ENCODE measurements at regions of chr12 and their contacts with region 1.

Region 1: GRCh38 chr12:117236456-117237001 is 46.3 kb upstream of the FBXO21 start:
- DNase-seq: peak; percentile 93
- ATAC-seq: peak; percentile 60
- H3K4me3 Mint-ChIP-seq: no peak overlapping the region
- H3K27ac Mint-ChIP-seq: no peak overlapping the region
- H3K4me1 Mint-ChIP-seq: no peaks in the 10 kb centered on the region
- H3K27me3 Mint-ChIP-seq: peaks cover 4% of the 10 kb centered on the region
- CTCF ChIP-seq: peak; percentile 89

Region 2: DNA sequence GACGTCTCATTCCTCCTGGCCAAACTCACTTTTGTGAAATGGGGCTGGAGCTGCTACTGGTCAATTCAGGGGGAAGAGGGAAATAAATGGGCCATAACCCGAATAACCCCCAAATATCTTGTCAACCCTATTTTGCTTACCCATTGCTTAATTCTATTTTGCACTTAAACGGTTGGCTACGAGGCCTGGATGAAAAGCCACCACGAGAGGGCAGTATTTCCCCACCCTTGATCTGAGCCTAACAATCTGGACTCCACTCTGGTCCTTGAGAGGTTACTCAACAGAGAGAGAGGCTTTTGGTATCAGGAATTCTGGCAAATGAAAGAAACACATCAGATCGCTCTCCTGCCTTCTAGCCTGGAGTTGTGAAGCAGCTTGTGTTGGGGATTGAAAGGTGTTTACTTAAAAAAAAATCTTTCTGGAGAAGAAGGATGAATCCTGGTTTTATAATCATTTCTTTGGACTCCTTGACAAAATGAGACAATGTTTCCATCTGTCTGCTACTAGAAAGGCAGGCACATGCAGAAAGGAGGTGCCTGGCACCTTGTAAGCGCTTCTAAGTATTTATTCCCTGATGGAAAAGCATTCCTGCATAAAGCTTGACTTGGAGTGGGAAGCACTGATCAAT is 23.9 kb before region 1 on chr12:
- CTCF ChIA-PET with region 1: interaction called, 11 read pairs
- POLR2A ChIA-PET with region 1: no interaction called
- intact Hi-C with region 1: no loop called
- DNase-seq: peak; percentile 83
- ATAC-seq: peak; percentile 42
- H3K4me3 Mint-ChIP-seq: no peak overlapping the region
- H3K27ac Mint-ChIP-seq: no peak overlapping the region
- H3K4me1 Mint-ChIP-seq: no peaks in the 10 kb centered on the region
- H3K27me3 Mint-ChIP-seq: peaks cover 9% of the 10 kb centered on the region
- CTCF ChIP-seq: peak; percentile 79

Region 3: DNA sequence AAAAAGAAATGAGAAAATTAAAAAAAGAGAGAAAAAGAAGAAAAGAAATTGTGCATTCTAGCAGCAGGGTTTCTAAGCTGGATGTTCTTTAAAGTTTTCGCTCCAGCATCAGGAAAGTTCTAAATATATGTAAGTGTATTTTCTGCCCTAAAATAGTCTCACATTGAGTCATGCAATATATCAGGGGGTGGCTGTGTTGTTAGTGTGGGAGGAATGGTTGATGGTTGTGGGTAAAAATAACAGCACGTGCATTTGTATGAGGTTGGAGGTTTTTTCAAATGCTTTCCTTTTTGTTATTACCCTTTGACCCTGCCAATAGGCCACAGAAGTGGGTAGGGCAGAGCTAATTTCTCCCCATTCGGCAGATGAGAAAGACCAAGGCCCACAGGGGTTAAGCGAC is 18.9 kb after region 1 on chr12:
- CTCF ChIA-PET with region 1: interaction called, 16 read pairs
- POLR2A ChIA-PET with region 1: no interaction called
- intact Hi-C with region 1: no loop called
- DNase-seq: no peak
- ATAC-seq: no peak
- H3K4me3 Mint-ChIP-seq: no peak overlapping the region
- H3K27ac Mint-ChIP-seq: no peak overlapping the region
- H3K4me1 Mint-ChIP-seq: no peaks in the 10 kb centered on the region
- H3K27me3 Mint-ChIP-seq: no peaks in the 10 kb centered on the region
- CTCF ChIP-seq: no peak

Region 4: DNA sequence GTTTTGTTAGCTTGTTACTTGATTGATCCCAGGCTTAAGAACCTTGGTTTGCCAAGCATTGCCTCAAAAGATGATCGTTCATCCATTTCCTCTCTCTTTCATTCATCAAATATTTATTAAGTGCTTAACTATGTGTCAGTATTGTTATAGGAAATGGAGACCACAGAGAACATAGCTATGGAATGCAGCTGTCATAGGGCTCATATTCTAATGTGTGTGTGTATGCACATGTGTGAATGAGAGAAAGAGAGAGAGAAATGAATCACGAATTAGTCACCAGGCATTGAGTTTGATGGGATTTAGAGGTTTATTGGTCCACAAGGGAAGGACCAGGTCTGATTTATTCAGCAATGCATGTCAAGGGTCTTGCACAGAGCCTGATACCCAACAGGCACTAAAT is 24.7 kb after region 1 on chr12:
- CTCF ChIA-PET with region 1: interaction called, 16 read pairs
- POLR2A ChIA-PET with region 1: interaction called, 3 read pairs
- intact Hi-C with region 1: no loop called
- DNase-seq: no peak
- ATAC-seq: no peak
- H3K4me3 Mint-ChIP-seq: no peak overlapping the region
- H3K27ac Mint-ChIP-seq: no peak overlapping the region
- H3K4me1 Mint-ChIP-seq: no peaks in the 10 kb centered on the region
- H3K27me3 Mint-ChIP-seq: peaks cover 3% of the 10 kb centered on the region
- CTCF ChIP-seq: no peak